Activated CD8-positive, alpha-beta T cell treated with anti-CD3 and anti-CD28 coated beads for 36 hours (primary cell): ENCODE measurements at regions of chr1 and their contacts with region 1.

Region 1: DNA sequence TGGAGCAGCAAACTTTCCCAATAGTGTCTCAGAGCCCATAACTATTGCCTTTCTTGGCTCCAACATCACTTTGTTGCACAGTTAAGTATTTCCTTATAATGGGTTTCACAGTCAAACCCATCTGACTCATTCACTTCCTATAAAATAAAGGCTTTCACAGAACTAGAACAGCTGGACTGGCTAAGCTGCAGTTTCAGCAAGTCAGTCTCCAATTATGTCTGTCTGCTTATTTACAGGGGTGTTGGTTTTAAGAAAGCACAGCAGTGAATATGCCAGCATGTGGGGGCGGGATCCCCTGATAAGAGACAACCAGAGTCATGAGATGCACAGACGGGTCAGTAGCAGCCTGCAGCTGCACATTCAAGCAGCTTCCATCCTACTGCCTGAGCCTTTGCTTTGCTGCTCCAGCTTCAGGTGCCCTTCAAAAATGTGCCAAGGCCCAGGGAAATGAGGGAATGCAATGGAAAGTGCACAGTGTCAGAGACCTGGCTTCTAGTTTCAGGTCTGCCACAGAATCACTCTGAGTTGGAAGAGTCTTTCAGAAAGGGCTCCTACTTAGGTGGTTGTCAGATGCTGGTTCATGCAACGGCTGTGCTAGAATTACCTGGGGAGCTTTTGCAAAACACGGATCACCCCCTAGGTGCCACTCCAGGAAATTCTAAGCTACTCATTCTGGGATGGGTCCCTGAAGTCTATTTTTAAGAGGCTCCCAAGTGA is 24.8 kb downstream of the RNF19B start:
- DNase-seq: peak; percentile 77
- ATAC-seq: peak; percentile 84
- H3K4me3 Mint-ChIP-seq: no peak overlapping the region
- H3K27ac Mint-ChIP-seq: peak overlapping the region; percentile 82
- H3K4me1 Mint-ChIP-seq: peaks cover 17% of the 10 kb centered on the region
- H3K27me3 Mint-ChIP-seq: no peaks in the 10 kb centered on the region
- CTCF ChIP-seq: no peak

Region 2: DNA sequence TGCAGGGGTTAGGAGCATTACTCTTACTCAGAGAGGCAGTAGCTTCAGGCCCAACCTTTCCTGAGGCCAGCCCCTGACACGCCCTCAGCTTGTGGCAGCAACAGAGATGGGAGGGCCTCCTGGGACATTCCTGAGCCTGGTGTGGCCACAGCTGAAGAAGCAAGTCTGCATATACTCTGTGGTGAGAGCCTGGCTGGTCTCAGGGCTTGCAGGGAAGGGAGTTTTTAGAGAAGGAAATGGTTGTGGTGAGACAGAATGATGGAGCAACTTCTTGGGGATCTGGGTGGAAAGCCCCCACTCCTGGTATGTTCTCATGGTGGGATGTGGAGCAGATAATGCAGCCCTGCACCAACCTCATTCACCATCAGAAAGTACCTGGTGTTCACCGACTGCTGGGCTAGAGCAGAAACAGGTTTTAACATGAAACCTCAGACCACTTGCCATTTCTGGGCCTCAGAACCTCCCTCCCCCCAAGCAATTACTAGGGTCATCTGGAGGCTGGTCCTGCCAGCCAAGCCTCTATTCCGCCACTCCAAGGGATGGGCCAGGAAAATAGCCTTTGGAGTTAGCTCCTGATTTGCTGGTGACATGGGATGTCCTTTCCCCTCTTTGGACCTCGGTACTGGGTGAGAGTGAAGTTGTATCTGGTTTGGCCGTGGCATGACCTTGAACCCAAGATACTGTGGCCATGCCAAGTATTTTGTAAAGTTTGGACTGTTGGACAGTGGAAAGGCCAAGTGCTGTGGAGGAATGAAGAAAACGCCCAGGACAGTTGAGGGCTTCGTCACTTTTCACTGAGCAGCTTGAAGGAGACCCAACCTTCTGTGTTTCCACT is 52.9 kb after region 1 on chr1:
- CTCF ChIA-PET with region 1: interaction called, 13 read pairs
- POLR2A ChIA-PET with region 1: no interaction called
- intact Hi-C with region 1: loop called (anchors 10 kb)
- DNase-seq: peak; percentile 84
- ATAC-seq: peak; percentile 87
- H3K4me3 Mint-ChIP-seq: no peak overlapping the region
- H3K27ac Mint-ChIP-seq: peak overlapping the region; percentile 21
- H3K4me1 Mint-ChIP-seq: peaks cover 38% of the 10 kb centered on the region
- H3K27me3 Mint-ChIP-seq: no peaks in the 10 kb centered on the region
- CTCF ChIP-seq: no peak

Region 3: GRCh38 chr1:33055210-33056008 is 115.6 kb after region 1 on chr1:
- CTCF ChIA-PET with region 1: interaction called, 104 read pairs
- POLR2A ChIA-PET with region 1: no interaction called
- intact Hi-C with region 1: loop called (anchors 2 kb)
- DNase-seq: peak; percentile 41
- ATAC-seq: peak; percentile 77
- H3K4me3 Mint-ChIP-seq: no peak overlapping the region
- H3K27ac Mint-ChIP-seq: no peak overlapping the region
- H3K4me1 Mint-ChIP-seq: peaks cover 4% of the 10 kb centered on the region
- H3K27me3 Mint-ChIP-seq: no peaks in the 10 kb centered on the region
- CTCF ChIP-seq: peak; percentile 76

Region 4: GRCh38 chr1:33080885-33081553 is 141.2 kb after region 1 on chr1 and contains the start of gene AZIN2:
- CTCF ChIA-PET with region 1: interaction called, 44 read pairs
- POLR2A ChIA-PET with region 1: no interaction called
- intact Hi-C with region 1: loop called (anchors 10 kb)
- DNase-seq: peak; percentile 99
- ATAC-seq: peak; percentile 99
- H3K4me3 Mint-ChIP-seq: peak within 1 kb of the TSS; percentile 74
- H3K27ac Mint-ChIP-seq: no peak within 1 kb of the TSS
- H3K4me1 Mint-ChIP-seq: peaks cover 16% of the 10 kb centered on the region
- H3K27me3 Mint-ChIP-seq: no peaks in the 10 kb centered on the region
- CTCF ChIP-seq: no peak
- total RNA-seq, gene AZIN2: 2.5 TPM